Heart left ventricle (tissue), 16 donors: ENCODE measurements at regions of chr7 and their contacts with region 1.

Region 1: DNA sequence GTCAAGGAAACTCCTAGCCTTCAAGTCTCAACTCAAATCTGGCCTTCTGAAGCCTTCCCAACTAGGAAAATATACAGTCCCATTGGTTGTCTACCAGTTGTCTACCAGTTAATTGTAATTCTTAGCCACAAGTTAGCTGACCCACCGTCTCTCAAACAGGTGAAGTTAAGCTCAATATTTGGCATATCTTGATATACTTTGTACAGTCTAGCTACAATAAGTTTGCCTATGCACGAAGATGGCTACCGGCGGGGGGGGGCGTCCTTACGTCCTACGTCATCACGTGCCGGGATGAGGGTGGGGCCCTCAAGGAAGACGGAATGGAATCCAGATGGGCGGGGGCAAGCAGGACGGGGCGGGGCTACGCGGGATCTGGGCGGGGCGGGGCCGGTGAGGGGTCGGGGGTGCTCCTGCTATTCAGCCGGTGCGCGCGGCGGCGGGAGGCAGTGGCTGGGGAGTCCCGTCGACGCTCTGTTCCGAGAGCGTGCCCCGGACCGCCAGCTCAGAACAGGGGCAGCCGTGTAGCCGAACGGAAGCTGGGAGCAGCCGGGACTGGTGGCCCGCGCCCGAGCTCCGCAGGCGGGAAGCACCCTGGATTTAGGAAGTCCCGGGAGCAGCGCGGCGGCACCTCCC is at the start of gene AHR:
- DNase-seq: peak; percentile 93 to 97 (median 94)
- ATAC-seq: peak; percentile 93 to 97 (median 97)
- H3K4me3 ChIP-seq: peak within 1 kb of the TSS; percentile 84 to 98 (median 92)
- H3K27ac ChIP-seq: peak within 1 kb of the TSS; percentile 88 to 98 (median 96)
- H3K4me1 ChIP-seq: peaks cover 3 to 44% (median 23%) of the 10 kb centered on the region in 12 donors
- H3K27me3 ChIP-seq: no peaks in the 10 kb centered on the region
- CTCF ChIP-seq: no peak
- POLR2A ChIP-seq: peak in 1 of 2 donors; percentile 98
- total RNA-seq, gene AHR: 19.5 to 84.6 (median 46.1) TPM

Region 2: DNA sequence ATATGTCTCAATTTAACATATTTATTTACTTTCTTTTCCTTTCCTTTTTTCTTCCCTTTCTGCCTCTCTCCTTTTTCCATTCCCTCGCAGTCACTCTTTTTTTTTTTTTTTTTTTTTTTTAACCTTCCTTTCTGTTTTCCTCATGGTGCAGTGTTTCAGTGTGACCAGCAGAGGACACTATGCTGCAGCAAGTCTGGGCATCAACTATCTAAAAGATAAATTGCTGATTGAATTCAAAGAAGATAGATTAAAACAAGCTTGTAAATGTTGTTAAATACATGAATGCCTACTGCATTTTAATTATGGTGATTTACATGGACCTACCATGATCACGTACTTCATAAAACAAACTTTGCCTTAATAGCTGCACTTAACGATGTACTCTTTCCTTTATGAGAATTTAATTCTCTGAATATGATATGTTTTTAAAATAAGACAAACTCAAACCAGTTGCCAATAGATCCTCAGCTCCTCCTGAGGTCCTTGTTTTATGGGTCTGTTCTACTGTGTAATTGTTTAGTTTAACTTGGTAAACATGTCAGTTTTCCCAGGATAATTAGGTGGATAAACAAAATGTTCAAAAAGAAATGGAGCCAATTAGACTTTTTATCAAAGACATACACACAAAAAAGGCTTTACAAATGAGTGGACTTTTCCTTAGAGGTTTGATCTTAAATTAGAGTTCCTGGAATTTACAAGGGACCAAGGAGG is 315.5 kb before region 1 on chr7:
- intact Hi-C with region 1: loop called in 9 of 10 experiments (anchors 2 to 10 kb)
- DNase-seq: peak in 1 of 5 donors; percentile 19
- ATAC-seq: peak in 1 of 4 donors; percentile 39
- H3K4me3 ChIP-seq: no peak overlapping the region
- H3K27ac ChIP-seq: no peak overlapping the region
- H3K4me1 ChIP-seq: peaks cover 0 to 20% (median 3%) of the 10 kb centered on the region in 12 donors
- H3K27me3 ChIP-seq: no peaks in the 10 kb centered on the region
- CTCF ChIP-seq: peak; percentile 79 to 98 (median 94)
- POLR2A ChIP-seq: no peak

Region 3: GRCh38 chr7:17185690-17186070 is 112.6 kb before region 1 on chr7:
- intact Hi-C with region 1: loop called in 1 of 10 experiments (anchors 5 kb)
- DNase-seq: no peak
- ATAC-seq: peak in 1 of 4 donors; percentile 48
- H3K4me3 ChIP-seq: no peak overlapping the region
- H3K27ac ChIP-seq: no peak overlapping the region
- H3K4me1 ChIP-seq: peaks cover 0 to 23% (median 0%) of the 10 kb centered on the region in 12 donors
- H3K27me3 ChIP-seq: no peaks in the 10 kb centered on the region
- CTCF ChIP-seq: no peak
- POLR2A ChIP-seq: no peak

Region 4: DNA sequence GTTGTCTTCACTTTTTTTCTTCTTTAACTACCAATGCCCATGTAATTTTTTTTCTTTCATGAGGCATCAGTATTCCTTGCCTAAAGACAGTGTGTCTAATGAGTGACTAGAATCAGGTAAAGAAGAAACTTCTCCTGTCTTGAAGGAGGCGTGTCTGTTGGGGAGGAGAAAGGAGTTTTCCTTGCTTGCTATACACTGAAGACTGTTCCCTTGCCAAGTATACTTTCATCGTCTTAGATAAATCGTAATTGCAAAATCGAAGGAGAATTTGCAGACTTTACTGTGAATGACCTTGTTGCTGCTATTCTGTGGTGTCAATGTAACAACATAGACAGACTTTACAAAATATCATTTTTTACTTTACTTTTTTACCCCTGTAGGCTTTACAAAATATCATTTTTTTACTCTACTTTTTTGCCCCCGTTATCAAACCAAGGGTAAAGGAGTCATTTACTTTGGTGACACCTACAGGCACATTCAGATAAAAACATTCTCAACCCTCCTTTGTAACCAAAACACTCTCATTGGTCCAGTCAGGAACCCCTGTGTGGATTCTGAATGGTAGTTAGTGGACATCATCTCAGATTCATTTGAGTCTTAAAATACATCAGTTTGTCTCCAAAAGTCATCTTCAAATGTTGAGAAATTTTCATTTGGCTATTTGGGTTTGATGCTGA is 232.6 kb after region 1 on chr7:
- intact Hi-C with region 1: loop called in 3 of 10 experiments (anchors 5 to 10 kb)
- DNase-seq: no peak
- ATAC-seq: peak in 2 of 4 donors; percentile 36 to 39
- H3K4me3 ChIP-seq: peak overlapping the region in 2 of 12 donors; percentile 8 to 11
- H3K27ac ChIP-seq: no peak overlapping the region
- H3K4me1 ChIP-seq: peaks cover 0 to 21% (median 0%) of the 10 kb centered on the region in 12 donors
- H3K27me3 ChIP-seq: no peaks in the 10 kb centered on the region
- CTCF ChIP-seq: peak; percentile 13 to 61 (median 32)
- POLR2A ChIP-seq: no peak

Region 5: DNA sequence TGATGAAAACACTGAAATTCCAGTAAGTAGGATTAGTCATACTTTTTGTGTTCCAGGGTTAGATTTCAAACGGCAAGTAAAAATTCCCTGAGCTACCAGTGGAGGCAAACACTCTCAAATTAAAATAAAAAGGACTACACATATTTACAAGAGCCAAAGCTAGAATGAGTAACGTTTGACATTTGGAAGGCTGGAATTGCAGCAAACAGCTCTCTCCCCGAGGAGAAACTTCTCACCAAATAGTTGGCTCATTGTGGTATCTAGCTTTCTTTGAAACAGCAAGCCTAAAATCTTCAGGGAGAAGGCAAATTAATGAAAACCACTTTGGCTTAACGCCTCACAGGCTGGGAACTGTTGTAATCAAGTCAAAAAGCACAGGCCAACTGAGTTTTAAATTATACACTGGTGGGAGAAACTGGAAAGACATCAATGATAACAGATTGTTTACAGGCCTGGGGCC is 353.6 kb after region 1 on chr7:
- intact Hi-C with region 1: loop called in 7 of 10 experiments (anchors 5 to 10 kb)
- DNase-seq: peak in 3 of 5 donors; percentile 27 to 38 (median 38)
- ATAC-seq: peak; percentile 73 to 94 (median 88)
- H3K4me3 ChIP-seq: no peak overlapping the region
- H3K27ac ChIP-seq: peak overlapping the region in 8 of 12 donors; percentile 18 to 63 (median 27)
- H3K4me1 ChIP-seq: peaks cover 0 to 29% (median 2%) of the 10 kb centered on the region in 12 donors
- H3K27me3 ChIP-seq: no peaks in the 10 kb centered on the region
- CTCF ChIP-seq: peak in 6 of 12 donors; percentile 16 to 39 (median 24)
- POLR2A ChIP-seq: no peak